ENCODE measurements at regions of chr1 and their contacts with region 1.

Region 1: GRCh38 chr1:19485362-19486187 is at the start of gene CAPZB:
- DNase-seq: peak; percentile 93
- ATAC-seq: peak; percentile 89
- H3K4me3 ChIP-seq: peak within 1 kb of the TSS; percentile 100
- H3K27ac ChIP-seq: peak within 1 kb of the TSS; percentile 66
- H3K4me1 ChIP-seq: peaks cover 35% of the 10 kb centered on the region
- H3K27me3 ChIP-seq: no peaks in the 10 kb centered on the region
- CTCF ChIP-seq: no peak
- total RNA-seq, gene CAPZB: 86.7 and 94.3 TPM in 2 replicates

Region 2: DNA sequence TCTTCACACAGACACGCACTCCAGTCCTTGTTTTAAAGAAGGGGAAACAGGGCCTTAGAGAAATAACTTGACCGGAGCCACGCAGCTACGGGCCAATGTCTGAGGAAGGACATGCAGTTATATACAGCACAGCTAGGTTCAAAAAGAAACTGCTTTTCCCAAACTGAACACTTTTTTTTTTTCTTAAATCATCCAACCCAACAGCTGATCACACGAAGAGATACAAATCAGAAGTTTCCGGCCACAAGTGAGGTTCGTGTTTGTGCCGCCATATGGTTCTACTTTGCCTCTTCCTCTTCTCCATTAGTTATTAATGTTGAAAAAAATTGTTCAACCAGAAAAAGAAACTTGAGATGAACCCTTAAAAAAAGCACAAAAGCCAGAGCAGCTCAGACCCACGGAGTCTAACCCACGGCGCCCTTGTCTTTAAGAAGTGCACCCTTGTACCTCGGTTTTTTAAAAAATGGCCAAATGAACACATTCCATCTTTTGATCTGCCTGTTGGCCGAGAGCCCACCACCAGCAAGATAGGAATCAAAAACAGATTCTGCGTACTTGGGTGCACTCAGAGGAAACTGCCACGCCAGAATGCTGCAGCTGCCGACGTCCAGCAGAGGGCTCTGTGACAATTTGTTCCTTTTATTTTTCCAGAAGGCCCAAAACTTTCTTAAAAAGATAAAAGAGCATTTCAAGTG is 94.5 kb before region 1 on chr1:
- CTCF ChIA-PET with region 1: no interaction called
- POLR2A ChIA-PET with region 1: no interaction called
- intact Hi-C with region 1: loop called (anchors 10 kb)
- DNase-seq: peak; percentile 55
- ATAC-seq: peak; percentile 46; the same call in 1 of the 2 replicates
- H3K4me3 ChIP-seq: no peak overlapping the region
- H3K27ac ChIP-seq: no peak overlapping the region
- H3K4me1 ChIP-seq: peaks cover 4% of the 10 kb centered on the region; the same call in 1 of the 2 replicates
- H3K27me3 ChIP-seq: no peaks in the 10 kb centered on the region
- CTCF ChIP-seq: peak; percentile 91

Region 3: GRCh38 chr1:19439464-19440171 is 46.0 kb before region 1 on chr1:
- CTCF ChIA-PET with region 1: interaction called, 3 read pairs
- POLR2A ChIA-PET with region 1: no interaction called
- intact Hi-C with region 1: loop called (anchors 10 kb)
- DNase-seq: no peak
- ATAC-seq: no peak
- H3K4me3 ChIP-seq: no peak overlapping the region
- H3K27ac ChIP-seq: peak overlapping the region; percentile 55
- H3K4me1 ChIP-seq: peaks cover 18% of the 10 kb centered on the region
- H3K27me3 ChIP-seq: no peaks in the 10 kb centered on the region
- CTCF ChIP-seq: peak; percentile 39

Region 4: DNA sequence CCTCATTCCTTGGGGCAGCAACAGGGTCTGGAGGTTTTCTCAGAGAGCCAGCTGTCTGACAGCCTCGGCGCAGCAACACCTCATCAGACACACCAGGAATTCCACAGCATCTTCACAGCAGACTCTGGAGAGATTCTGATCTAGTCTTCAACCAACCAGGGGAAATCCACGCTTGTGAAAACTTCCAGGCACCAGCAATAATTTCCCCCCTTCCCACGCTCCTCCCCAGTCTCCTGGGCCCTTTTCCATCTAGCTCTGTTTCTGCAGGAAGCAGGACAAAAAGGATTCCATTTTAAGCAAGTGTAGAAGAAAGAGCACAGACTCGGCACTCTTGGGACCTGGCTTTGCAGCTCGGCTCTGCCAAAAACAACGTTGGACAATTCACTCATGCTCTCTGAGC is 44.1 kb after region 1 on chr1:
- CTCF ChIA-PET with region 1: interaction called, 3 read pairs
- POLR2A ChIA-PET with region 1: no interaction called
- intact Hi-C with region 1: loop called (anchors 5 kb)
- DNase-seq: no peak
- ATAC-seq: no peak
- H3K4me3 ChIP-seq: no peak overlapping the region
- H3K27ac ChIP-seq: no peak overlapping the region
- H3K4me1 ChIP-seq: peaks cover 18% of the 10 kb centered on the region
- H3K27me3 ChIP-seq: no peaks in the 10 kb centered on the region
- CTCF ChIP-seq: no peak

Region 5: GRCh38 chr1:19596714-19597495 is 111.3 kb after region 1 on chr1:
- CTCF ChIA-PET with region 1: no interaction called
- POLR2A ChIA-PET with region 1: no interaction called
- intact Hi-C with region 1: loop called (anchors 2 kb)
- DNase-seq: peak; percentile 96
- ATAC-seq: peak; percentile 94
- H3K4me3 ChIP-seq: peak overlapping the region; percentile 90
- H3K27ac ChIP-seq: peak overlapping the region; percentile 79
- H3K4me1 ChIP-seq: peaks cover 19% of the 10 kb centered on the region
- H3K27me3 ChIP-seq: no peaks in the 10 kb centered on the region
- CTCF ChIP-seq: no peak

Region 6: GRCh38 chr1:19643602-19644394 is 158.2 kb after region 1 on chr1 and contains the start of gene NBL1:
- CTCF ChIA-PET with region 1: no interaction called
- POLR2A ChIA-PET with region 1: interaction called, 15 read pairs
- intact Hi-C with region 1: loop called (anchors 2 kb)
- DNase-seq: peak; percentile 62
- ATAC-seq: peak; percentile 60
- H3K4me3 ChIP-seq: peak within 1 kb of the TSS; percentile 100
- H3K27ac ChIP-seq: peak within 1 kb of the TSS; percentile 51
- H3K4me1 ChIP-seq: peaks cover 41% of the 10 kb centered on the region
- H3K27me3 ChIP-seq: no peaks in the 10 kb centered on the region
- CTCF ChIP-seq: no peak
- total RNA-seq, gene NBL1: 117 and 141 TPM in 2 replicates

Region 7: GRCh38 chr1:19894218-19894617 is 408.6 kb after region 1 on chr1:
- CTCF ChIA-PET with region 1: no interaction called
- POLR2A ChIA-PET with region 1: interaction called, 16 read pairs
- intact Hi-C with region 1: no loop called
- DNase-seq: peak; percentile 86
- ATAC-seq: peak; percentile 77
- H3K4me3 ChIP-seq: no peak overlapping the region
- H3K27ac ChIP-seq: peak overlapping the region; percentile 96
- H3K4me1 ChIP-seq: peaks cover 40% of the 10 kb centered on the region
- H3K27me3 ChIP-seq: no peaks in the 10 kb centered on the region
- CTCF ChIP-seq: no peak

Measured in PC-3 (cell line).